ENCODE measurements at regions of chr6 and their contacts with region 1.

Region 1: DNA sequence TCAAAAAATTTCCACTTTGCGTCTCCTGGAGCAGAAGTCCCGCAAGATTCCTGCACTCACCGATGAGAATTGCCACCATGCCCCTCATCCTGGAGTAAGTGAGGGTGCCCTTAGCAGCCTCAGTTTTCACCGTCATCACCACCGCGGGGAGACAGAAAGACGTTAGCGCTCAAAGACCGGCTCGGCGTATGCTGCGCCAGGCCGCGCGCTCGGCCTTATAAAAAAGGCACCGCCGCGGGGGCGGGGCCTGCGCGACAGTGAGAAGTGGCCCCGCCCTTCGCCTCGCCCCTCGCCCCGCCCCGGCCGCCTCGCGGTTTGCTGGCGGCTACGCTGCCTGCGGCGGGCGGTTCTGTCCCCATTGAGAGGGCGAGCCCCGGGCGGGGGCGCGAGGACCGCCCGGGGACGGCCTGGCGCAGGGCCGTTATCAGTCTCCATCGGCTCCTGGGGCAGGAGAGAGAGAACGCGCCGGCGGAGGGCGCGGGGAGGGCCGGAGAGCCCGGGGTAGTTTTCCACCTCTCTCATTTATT is 122.3 kb upstream of the SLC2A12 start:
- DNase-seq: peak; percentile 87 to 97 (median 94)
- ATAC-seq: peak; percentile 72
- H3K4me3 ChIP-seq: peak overlapping the region; percentile 60
- H3K4me3 Mint-ChIP-seq: peak overlapping the region; percentile 95
- H3K27ac ChIP-seq: peak overlapping the region; percentile 29 to 84
- H3K27ac Mint-ChIP-seq: peak overlapping the region; percentile 84
- H3K4me1 ChIP-seq: peaks cover 66% of the 10 kb centered on the region
- H3K4me1 Mint-ChIP-seq: peaks cover 72% of the 10 kb centered on the region
- H3K27me3 ChIP-seq: no peaks in the 10 kb centered on the region
- H3K27me3 Mint-ChIP-seq: no peaks in the 10 kb centered on the region
- CTCF ChIP-seq: no peak

Region 2: GRCh38 chr6:133952815-133953633 is 221.7 kb before region 1 on chr6 and contains the start of gene TBPL1:
- CTCF ChIA-PET with region 1: no interaction called
- POLR2A ChIA-PET with region 1: no interaction called
- intact Hi-C with region 1: loop called in 1 of 2 experiments (anchors 5 kb)
- DNase-seq: peak; percentile 77 to 96 (median 88)
- ATAC-seq: peak; percentile 83
- H3K4me3 ChIP-seq: peak within 1 kb of the TSS; percentile 83
- H3K4me3 Mint-ChIP-seq: peak within 1 kb of the TSS; percentile 97
- H3K27ac ChIP-seq: peak within 1 kb of the TSS; percentile 68 to 71
- H3K27ac Mint-ChIP-seq: peak within 1 kb of the TSS; percentile 91
- H3K4me1 ChIP-seq: peaks cover 14% of the 10 kb centered on the region
- H3K4me1 Mint-ChIP-seq: peaks cover 48% of the 10 kb centered on the region
- H3K27me3 ChIP-seq: no peaks in the 10 kb centered on the region
- H3K27me3 Mint-ChIP-seq: no peaks in the 10 kb centered on the region
- CTCF ChIP-seq: no peak
- total RNA-seq, gene TBPL1: 34.7 to 37.3 TPM

Region 3: GRCh38 chr6:134317471-134318131 is 142.9 kb after region 1 on chr6 and contains the start of gene SGK1:
- CTCF ChIA-PET with region 1: interaction called, 4 read pairs
- POLR2A ChIA-PET with region 1: interaction called, 3 read pairs
- intact Hi-C with region 1: loop called in 1 of 2 experiments (anchors 5 kb)
- DNase-seq: peak in 11 of 14 experiments; percentile 1 to 55 (median 19)
- ATAC-seq: peak; percentile 68
- H3K4me3 ChIP-seq: peak within 1 kb of the TSS; percentile 62
- H3K4me3 Mint-ChIP-seq: peak within 1 kb of the TSS; percentile 85
- H3K27ac ChIP-seq: no peak within 1 kb of the TSS
- H3K27ac Mint-ChIP-seq: no peak within 1 kb of the TSS
- H3K4me1 ChIP-seq: peaks cover 9% of the 10 kb centered on the region
- H3K4me1 Mint-ChIP-seq: peaks cover 22% of the 10 kb centered on the region
- H3K27me3 ChIP-seq: peaks cover 0 to 5% of the 10 kb centered on the region in 2 experiments
- H3K27me3 Mint-ChIP-seq: peaks cover 28% of the 10 kb centered on the region
- CTCF ChIP-seq: no peak
- total RNA-seq, gene SGK1: 117 to 120 TPM

Region 4: DNA sequence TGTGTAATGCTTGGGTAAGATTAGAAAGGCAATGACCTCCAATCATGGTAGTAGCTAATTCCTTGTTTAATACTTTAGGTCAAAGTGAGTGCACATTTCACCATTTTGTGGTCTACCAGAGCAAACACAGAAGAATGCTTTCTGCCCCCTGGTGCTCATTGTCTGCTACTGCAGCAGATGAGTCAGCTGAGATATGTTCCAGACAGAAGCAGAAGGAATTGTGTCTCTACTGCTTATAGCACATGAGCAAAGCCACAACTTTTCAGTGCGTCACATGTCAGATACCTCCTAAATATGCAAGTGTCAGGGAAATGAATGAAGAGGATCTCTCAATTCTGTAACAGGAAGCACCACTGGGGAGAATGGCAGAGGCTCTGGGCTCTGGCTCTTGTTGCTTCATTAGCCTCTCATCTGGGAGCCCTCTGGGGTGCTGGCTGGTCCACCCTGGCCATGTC is 466.3 kb after region 1 on chr6:
- CTCF ChIA-PET with region 1: interaction called, 31 read pairs
- POLR2A ChIA-PET with region 1: interaction called, 23 read pairs
- intact Hi-C with region 1: loop called (anchors 1 kb)
- DNase-seq: peak; percentile 63 to 89 (median 72)
- ATAC-seq: peak; percentile 97
- H3K4me3 ChIP-seq: no peak overlapping the region
- H3K4me3 Mint-ChIP-seq: no peak overlapping the region
- H3K27ac ChIP-seq: no peak overlapping the region
- H3K27ac Mint-ChIP-seq: no peak overlapping the region
- H3K4me1 ChIP-seq: peaks cover 4% of the 10 kb centered on the region
- H3K4me1 Mint-ChIP-seq: peaks cover 11% of the 10 kb centered on the region
- H3K27me3 ChIP-seq: no peaks in the 10 kb centered on the region
- H3K27me3 Mint-ChIP-seq: no peaks in the 10 kb centered on the region
- CTCF ChIP-seq: peak; percentile 97

Region 5: DNA sequence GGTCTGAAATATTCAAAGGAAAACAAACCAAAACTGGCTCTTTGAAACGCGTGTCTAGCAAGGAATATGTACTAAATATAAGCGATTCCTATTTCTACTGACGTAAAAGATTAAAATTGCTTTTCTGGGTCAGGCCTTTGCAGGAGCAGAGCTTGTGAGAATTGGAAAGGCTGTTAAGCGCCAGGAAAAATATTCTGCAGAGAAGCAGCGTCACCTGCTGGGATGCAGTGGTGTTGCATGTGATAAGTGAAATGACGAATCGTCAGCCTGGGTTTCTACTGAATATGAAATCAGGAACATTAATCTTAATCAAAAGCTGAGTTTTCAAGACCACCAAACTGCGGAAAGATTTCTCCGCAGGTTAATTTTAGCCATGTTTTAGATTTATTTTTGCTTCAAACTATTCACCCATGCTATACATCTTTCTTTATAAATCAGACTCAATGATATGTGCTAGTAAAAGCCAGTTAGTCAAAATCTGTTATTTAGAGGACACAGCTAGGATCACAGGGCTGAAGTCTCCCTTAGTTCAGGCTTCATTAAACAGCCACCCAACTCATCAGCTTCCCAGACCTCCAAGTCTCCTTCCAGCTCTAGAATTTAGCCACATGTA is 707.8 kb after region 1 on chr6:
- CTCF ChIA-PET with region 1: no interaction called
- POLR2A ChIA-PET with region 1: no interaction called
- intact Hi-C with region 1: loop called (anchors 1 to 5 kb)
- DNase-seq: peak; percentile 11 to 74 (median 43)
- ATAC-seq: peak; percentile 65
- H3K4me3 ChIP-seq: no peak overlapping the region
- H3K4me3 Mint-ChIP-seq: no peak overlapping the region
- H3K27ac ChIP-seq: no peak overlapping the region
- H3K27ac Mint-ChIP-seq: no peak overlapping the region
- H3K4me1 ChIP-seq: no peaks in the 10 kb centered on the region
- H3K4me1 Mint-ChIP-seq: no peaks in the 10 kb centered on the region
- H3K27me3 ChIP-seq: peaks cover 0 to 4% of the 10 kb centered on the region in 2 experiments
- H3K27me3 Mint-ChIP-seq: peaks cover 19% of the 10 kb centered on the region
- CTCF ChIP-seq: peak; percentile 83

Region 6: DNA sequence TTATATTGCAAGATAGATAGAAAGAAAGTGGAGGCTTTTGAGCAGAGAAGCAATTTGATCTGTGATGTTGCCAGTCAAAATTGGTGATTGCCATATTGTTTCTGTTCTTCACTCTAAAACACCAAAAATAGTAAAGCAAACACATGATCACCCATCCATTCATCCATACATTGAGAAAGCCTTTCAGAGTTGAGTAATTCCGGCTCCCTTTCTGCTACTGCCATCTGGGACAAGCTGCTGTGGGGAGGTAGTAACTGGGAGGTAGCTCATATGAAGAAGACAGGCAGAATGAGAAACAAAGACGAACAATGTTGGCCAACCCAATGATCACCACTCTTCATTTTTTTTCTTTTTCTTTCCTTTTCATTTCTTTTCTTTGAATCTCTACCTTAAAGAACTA is 931.0 kb after region 1 on chr6:
- CTCF ChIA-PET with region 1: no interaction called
- POLR2A ChIA-PET with region 1: no interaction called
- intact Hi-C with region 1: loop called in 1 of 2 experiments (anchors 5 kb)
- DNase-seq: no peak
- ATAC-seq: no peak
- H3K4me3 ChIP-seq: no peak overlapping the region
- H3K4me3 Mint-ChIP-seq: no peak overlapping the region
- H3K27ac ChIP-seq: no peak overlapping the region
- H3K27ac Mint-ChIP-seq: peak overlapping the region; percentile 89
- H3K4me1 ChIP-seq: peaks cover 24% of the 10 kb centered on the region
- H3K4me1 Mint-ChIP-seq: peaks cover 66% of the 10 kb centered on the region
- H3K27me3 ChIP-seq: no peaks in the 10 kb centered on the region
- H3K27me3 Mint-ChIP-seq: no peaks in the 10 kb centered on the region
- CTCF ChIP-seq: no peak

Region 7: GRCh38 chr6:135438907-135439535 is 1264.3 kb after region 1 on chr6:
- CTCF ChIA-PET with region 1: no interaction called
- POLR2A ChIA-PET with region 1: no interaction called
- intact Hi-C with region 1: loop called in 1 of 2 experiments (anchors 5 kb)
- DNase-seq: peak in 3 of 14 experiments; percentile 40 to 50 (median 50)
- ATAC-seq: peak; percentile 44
- H3K4me3 ChIP-seq: no peak overlapping the region
- H3K4me3 Mint-ChIP-seq: peak overlapping the region; percentile 30
- H3K27ac ChIP-seq: no peak overlapping the region
- H3K27ac Mint-ChIP-seq: peak overlapping the region; percentile 68
- H3K4me1 ChIP-seq: no peaks in the 10 kb centered on the region
- H3K4me1 Mint-ChIP-seq: peaks cover 21% of the 10 kb centered on the region
- H3K27me3 ChIP-seq: no peaks in the 10 kb centered on the region
- H3K27me3 Mint-ChIP-seq: no peaks in the 10 kb centered on the region
- CTCF ChIP-seq: peak; percentile 57

Measured in CD4-positive, alpha-beta T cell (primary cell).